ENCODE measurements at regions of chr11 and their contacts with region 1.

Region 1: GRCh38 chr11:118338637-118339061 is 3.9 kb downstream of the CD3D start:
- DNase-seq: peak; percentile 97
- ATAC-seq: peak; percentile 63
- H3K4me3 Mint-ChIP-seq: peak overlapping the region; percentile 81
- H3K27ac Mint-ChIP-seq: peak overlapping the region; percentile 96
- H3K4me1 Mint-ChIP-seq: peaks cover 39% of the 10 kb centered on the region
- H3K27me3 Mint-ChIP-seq: no peaks in the 10 kb centered on the region
- CTCF ChIP-seq: no peak

Region 2: DNA sequence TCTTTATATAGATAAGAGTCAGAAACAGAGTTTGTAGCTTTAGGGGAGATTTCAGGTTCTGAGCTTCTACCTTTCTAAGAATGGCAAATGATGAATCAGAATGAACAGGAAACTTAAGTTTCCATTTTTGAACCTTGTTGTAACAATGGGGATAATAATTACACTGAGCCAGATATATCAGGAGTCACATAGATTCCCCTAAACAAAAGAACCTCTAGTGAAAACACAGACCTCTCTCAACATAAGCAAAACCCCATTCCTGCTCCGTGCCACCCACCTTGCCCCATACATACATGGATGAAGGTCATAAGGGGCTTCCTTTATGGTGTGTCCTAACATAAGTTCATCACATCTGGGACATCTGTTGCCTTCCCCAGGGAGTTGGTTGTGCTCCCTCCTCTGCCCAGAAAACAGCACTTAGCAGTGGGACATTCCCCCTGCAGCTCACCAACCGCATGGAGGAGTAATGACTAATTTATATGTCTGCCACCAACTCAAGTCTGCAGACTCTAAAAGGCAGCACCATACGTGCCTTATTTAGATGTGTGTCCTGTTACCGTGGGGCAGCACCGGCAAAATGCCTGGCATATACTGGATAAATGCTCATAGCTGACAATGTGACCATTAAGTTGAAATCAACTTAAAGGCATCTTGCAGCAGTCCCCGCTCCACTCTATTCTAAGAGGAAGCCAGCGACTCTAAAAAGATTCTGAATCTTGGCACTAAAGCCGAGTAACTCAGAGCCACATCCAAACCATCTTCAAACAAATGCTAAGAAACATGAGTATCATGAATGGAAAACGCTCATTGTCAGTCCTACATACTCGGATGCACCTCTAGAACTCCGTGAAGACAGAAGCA is 121.8 kb before region 1 on chr11:
- CTCF ChIA-PET with region 1: interaction called, 3 read pairs
- POLR2A ChIA-PET with region 1: interaction called, 13 read pairs
- intact Hi-C with region 1: loop called (anchors 5 kb)
- DNase-seq: peak; percentile 79
- ATAC-seq: peak; percentile 70
- H3K4me3 Mint-ChIP-seq: peak overlapping the region; percentile 96
- H3K27ac Mint-ChIP-seq: peak overlapping the region; percentile 100
- H3K4me1 Mint-ChIP-seq: peaks cover 84% of the 10 kb centered on the region
- H3K27me3 Mint-ChIP-seq: no peaks in the 10 kb centered on the region
- CTCF ChIP-seq: no peak

Region 3: DNA sequence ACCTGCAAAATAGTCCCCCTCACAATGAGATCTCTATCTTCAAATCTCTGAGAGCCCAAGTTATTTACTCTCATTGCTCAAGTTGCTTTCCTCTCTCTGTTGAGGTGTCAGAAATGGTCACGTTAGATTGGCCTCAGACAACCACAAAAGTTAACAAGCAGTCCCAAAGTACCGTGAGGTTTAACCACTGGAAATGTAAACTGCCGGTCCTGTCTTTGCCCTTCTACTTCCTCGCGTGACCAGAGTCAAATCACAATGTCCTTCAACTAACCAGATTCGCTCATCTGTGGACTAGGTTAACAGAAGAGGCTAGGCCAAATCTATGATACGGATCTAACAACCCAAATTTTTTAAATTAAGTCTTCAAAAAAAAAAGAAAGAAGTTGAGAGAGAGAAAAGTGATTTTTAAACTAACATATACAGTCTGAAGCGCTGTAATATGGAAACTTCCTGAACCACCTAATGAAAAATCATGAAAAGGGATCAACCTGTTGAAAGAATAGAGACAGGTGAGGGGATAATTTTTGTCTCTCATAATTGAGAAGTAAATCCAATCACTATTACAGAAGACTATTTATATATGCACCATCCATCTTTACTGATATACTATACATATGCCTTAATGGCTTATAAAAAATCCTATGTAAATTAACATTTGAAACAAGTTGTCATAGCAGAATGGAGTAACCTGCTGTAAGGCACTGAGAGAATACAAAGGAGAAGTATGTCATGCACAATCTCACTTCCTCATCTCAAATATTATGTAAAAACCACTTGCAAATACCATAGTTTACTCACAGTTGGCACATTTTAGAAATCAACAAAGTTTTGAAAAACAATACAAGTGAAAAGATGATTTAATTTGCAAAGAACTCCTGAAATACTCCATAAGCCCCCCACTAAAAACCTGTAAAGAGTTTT is 110.5 kb before region 1 on chr11:
- CTCF ChIA-PET with region 1: interaction called, 3 read pairs
- POLR2A ChIA-PET with region 1: interaction called, 15 read pairs
- intact Hi-C with region 1: no loop called
- DNase-seq: peak; percentile 60
- ATAC-seq: peak; percentile 2
- H3K4me3 Mint-ChIP-seq: peak overlapping the region; percentile 52
- H3K27ac Mint-ChIP-seq: no peak overlapping the region
- H3K4me1 Mint-ChIP-seq: peaks cover 39% of the 10 kb centered on the region
- H3K27me3 Mint-ChIP-seq: no peaks in the 10 kb centered on the region
- CTCF ChIP-seq: no peak

Region 4: DNA sequence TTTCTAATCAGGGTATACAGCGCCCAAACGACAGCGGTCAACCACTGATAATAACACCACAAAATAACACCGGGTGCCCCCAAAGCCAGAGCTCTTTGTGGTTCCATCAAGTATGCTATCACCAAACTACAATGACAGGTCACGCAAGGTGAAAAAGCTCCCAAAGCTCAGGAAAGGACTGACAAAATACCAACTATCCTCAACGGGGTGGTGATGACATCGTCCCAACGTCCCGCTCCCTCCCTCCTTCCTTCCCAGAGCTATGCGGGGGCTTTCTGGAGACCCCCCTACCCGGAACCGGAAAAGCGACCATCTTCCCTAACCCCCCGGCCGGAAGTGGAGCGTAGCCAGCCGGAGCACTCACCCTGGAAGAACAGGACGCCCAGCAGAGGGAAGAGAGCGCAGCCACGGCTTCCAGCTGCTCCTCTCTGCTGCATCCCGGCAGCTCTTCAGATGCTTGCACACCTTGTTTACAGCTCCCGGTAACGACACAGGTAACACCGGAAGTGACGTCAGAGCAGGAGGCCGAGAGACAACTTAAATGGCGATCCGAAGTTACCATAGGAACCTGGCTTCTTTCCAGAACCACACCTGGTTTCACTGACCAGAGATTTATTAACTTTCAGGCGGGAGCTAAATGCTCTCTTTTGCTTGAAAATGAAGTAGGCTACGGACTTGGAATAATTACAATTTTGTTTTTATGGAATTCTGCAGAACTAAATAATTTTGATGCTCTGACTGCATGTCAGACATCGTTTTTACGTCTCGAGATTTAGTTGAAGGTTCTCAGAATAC is 86.6 kb before region 1 on chr11 and contains the start of gene MPZL3:
- CTCF ChIA-PET with region 1: no interaction called
- POLR2A ChIA-PET with region 1: interaction called, 11 read pairs
- intact Hi-C with region 1: no loop called
- DNase-seq: peak; percentile 92
- ATAC-seq: peak; percentile 72
- H3K4me3 Mint-ChIP-seq: peak within 1 kb of the TSS; percentile 93
- H3K27ac Mint-ChIP-seq: peak within 1 kb of the TSS; percentile 99
- H3K4me1 Mint-ChIP-seq: peaks cover 49% of the 10 kb centered on the region
- H3K27me3 Mint-ChIP-seq: no peaks in the 10 kb centered on the region
- CTCF ChIP-seq: no peak
- total RNA-seq, gene MPZL3: 51.1 to 51.7 TPM

Region 5: GRCh38 chr11:118311518-118311917 is 27.1 kb before region 1 on chr11:
- CTCF ChIA-PET with region 1: interaction called, 10 read pairs
- POLR2A ChIA-PET with region 1: no interaction called
- intact Hi-C with region 1: no loop called
- DNase-seq: no peak
- ATAC-seq: peak; percentile 23
- H3K4me3 Mint-ChIP-seq: no peak overlapping the region
- H3K27ac Mint-ChIP-seq: peak overlapping the region; percentile 90
- H3K4me1 Mint-ChIP-seq: peaks cover 92% of the 10 kb centered on the region
- H3K27me3 Mint-ChIP-seq: no peaks in the 10 kb centered on the region
- CTCF ChIP-seq: no peak

Region 6: DNA sequence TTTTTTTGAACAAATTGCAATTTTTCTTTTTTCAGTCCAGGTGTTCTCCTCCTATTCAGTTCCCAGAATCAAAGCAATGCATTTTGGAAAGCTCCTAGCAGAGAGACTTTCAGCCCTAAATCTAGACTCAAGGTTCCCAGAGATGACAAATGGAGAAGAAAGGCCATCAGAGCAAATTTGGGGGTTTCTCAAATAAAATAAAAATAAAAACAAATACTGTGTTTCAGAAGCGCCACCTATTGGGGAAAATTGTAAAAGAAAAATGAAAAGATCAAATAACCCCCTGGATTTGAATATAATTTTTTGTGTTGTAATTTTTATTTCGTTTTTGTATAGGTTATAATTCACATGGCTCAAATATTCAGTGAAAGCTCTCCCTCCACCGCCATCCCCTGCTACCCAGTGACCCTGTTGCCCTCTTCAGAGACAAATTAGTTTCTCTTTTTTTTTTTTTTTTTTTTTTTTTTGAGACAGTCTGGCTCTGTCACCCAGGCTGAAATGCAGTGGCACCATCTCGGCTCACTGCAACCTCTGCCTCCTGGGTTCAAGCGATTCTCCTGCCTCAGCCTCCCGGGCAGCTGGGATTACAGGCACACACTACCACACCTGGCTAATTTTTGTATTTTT is 14.5 kb after region 1 on chr11:
- CTCF ChIA-PET with region 1: interaction called, 10 read pairs
- POLR2A ChIA-PET with region 1: interaction called, 13 read pairs
- intact Hi-C with region 1: no loop called
- DNase-seq: no peak
- ATAC-seq: peak; percentile 21
- H3K4me3 Mint-ChIP-seq: no peak overlapping the region
- H3K27ac Mint-ChIP-seq: peak overlapping the region; percentile 86
- H3K4me1 Mint-ChIP-seq: peaks cover 33% of the 10 kb centered on the region
- H3K27me3 Mint-ChIP-seq: no peaks in the 10 kb centered on the region
- CTCF ChIP-seq: peak; percentile 83

Measured in activated CD8-positive, alpha-beta T cell treated with anti-CD3 and anti-CD28 coated beads for 36 hours (primary cell).